ENCODE measurements at regions of chr5 and their contacts with region 1.

Region 1: GRCh38 chr5:179806250-179807222 is at the start of gene MGAT4B:
- DNase-seq: peak in 1 of 2 donors; percentile 86
- H3K4me3 ChIP-seq: peak within 1 kb of the TSS; percentile 77 to 97
- H3K27ac ChIP-seq: peak within 1 kb of the TSS; percentile 98
- H3K4me1 ChIP-seq: peaks cover 53% of the 10 kb centered on the region
- H3K27me3 ChIP-seq: no peaks in the 10 kb centered on the region
- CTCF ChIP-seq: no peak
- POLR2A ChIP-seq: peak in 1 of 2 donors; percentile 79
- total RNA-seq, gene MGAT4B: 95.5 TPM

Region 2: DNA sequence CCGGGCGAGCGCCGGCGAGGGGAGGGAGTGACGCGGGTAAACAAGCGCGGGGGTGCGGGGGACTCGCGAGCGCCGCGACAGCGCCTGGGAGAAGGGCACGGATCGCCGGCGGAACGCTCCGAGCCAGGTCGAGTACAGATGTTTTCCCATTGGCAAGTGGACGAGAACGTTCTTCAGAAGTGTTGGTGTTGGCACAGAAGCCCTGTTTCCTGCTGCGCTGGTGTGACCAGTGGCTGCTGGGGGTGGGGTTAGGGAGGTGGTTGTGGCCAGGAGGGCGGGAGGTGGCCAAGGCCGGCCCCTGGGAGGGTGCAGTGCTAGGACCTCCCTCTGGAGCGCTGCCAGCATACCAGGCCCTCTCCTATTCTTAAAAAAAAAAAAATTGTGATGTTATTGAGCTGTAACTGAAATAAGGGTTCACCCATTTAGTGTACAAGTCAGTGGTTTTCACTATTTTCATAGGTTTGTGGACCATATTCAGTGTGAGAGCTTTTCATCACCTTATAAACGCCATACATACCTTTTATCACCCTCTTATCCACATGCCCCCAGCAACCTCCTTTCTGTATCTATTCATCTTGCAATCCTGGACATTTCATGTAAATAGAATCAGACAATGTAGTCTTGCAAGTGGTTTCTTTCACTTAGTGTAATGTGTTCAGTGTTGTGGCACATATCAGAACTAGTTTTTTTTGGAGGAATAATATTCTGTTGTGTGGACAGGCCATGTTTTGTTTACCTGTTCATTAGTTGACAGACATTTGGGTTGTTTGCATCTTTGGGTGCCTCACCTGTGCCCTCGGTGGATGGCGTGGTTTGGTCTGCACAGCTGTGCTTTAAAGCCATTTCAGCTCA is 15.3 kb after region 1 on chr5:
- intact Hi-C with region 1: loop called (anchors 2 kb)
- DNase-seq: peak in 1 of 2 donors; percentile 96
- H3K4me3 ChIP-seq: peak overlapping the region; percentile 85 to 99
- H3K27ac ChIP-seq: peak overlapping the region; percentile 99
- H3K4me1 ChIP-seq: peaks cover 82% of the 10 kb centered on the region
- H3K27me3 ChIP-seq: no peaks in the 10 kb centered on the region
- CTCF ChIP-seq: peak in 1 of 3 experiments; percentile 12
- POLR2A ChIP-seq: peak in 1 of 2 donors; percentile 91

Region 3: GRCh38 chr5:179858586-179859427 is 52.3 kb after region 1 on chr5 and contains the start of gene MRNIP:
- intact Hi-C with region 1: loop called (anchors 10 kb)
- DNase-seq: peak in 1 of 2 donors; percentile 95
- H3K4me3 ChIP-seq: peak within 1 kb of the TSS; percentile 95 to 97
- H3K27ac ChIP-seq: peak within 1 kb of the TSS; percentile 96
- H3K4me1 ChIP-seq: peaks cover 36% of the 10 kb centered on the region
- H3K27me3 ChIP-seq: no peaks in the 10 kb centered on the region
- CTCF ChIP-seq: peak in 1 of 3 experiments; percentile 48
- POLR2A ChIP-seq: peak; percentile 31 to 61
- total RNA-seq, gene MRNIP: 53.8 TPM

Region 4: DNA sequence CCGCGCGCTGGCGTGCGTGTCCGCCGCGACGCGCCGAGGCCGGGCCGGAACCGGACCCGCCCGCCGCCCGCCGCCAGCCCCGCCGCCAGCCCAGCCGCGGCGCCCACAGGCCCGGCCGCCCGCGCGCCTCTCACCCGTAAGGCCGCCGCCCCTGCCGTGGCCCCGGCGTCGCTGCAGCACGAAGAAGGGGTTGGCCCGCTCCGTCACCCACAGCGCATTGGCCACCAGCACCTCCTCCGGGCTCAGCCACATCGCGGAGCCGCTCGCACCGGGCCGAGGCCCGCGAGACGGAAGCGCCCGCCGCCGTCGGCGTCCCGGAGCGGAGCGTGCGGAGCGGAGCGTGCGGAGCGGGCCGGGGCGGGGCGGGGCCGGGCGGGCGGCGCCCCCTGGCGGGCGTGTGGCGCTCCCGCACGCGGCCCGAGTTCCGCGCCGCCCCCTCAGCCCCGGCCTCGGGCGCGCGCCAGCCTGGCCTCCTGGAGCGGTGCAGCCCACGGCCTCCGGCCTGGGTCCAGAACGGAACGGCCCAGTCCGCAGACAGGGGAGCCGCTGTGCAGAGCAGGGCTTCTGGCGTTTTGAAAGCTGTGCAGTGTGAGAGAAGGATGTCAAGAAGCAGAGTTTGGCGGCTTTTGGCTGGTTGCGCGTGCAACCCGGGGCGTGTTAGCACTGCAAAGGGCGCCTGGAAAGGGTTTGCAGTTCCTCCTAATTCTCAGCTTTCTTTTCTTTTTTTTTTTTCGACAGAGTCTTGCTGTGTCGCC is 101.2 kb after region 1 on chr5 and contains the start of gene TBC1D9B:
- intact Hi-C with region 1: loop called (anchors 10 kb)
- DNase-seq: no peak
- H3K4me3 ChIP-seq: peak within 1 kb of the TSS; percentile 65 to 68
- H3K27ac ChIP-seq: peak within 1 kb of the TSS; percentile 79
- H3K4me1 ChIP-seq: peaks cover 25% of the 10 kb centered on the region
- H3K27me3 ChIP-seq: no peaks in the 10 kb centered on the region
- CTCF ChIP-seq: no peak
- POLR2A ChIP-seq: no peak
- total RNA-seq, gene TBC1D9B: 125 TPM

Measured in vagina (tissue), 2 donors.